Esophagus squamous epithelium (tissue), 5 donors: ENCODE measurements at regions of chr1 and their contacts with region 1.

Region 1: DNA sequence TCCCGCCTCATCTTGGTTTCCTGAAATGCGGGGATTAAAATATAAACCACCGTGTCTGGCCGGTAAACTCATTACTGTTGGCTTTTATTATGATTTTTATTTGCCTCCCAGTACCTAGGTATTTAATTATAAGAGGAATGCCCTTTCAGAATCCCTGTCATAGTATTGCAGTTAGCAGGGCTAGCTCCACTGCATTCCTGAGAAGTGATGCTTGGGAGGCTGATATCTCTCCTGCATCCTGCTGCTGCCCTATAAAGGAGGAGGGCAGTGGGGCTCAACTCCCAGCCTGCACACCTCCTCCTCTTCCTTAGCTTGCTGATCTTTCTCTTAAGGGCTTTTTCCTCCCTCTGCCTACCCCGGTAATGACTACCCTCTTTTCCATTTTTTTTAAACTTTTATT is 19.9 kb upstream of the DISC1 start:
- DNase-seq: no peak
- H3K4me3 ChIP-seq: no peak overlapping the region
- H3K27ac ChIP-seq: no peak overlapping the region
- H3K4me1 ChIP-seq: peaks cover 0 to 24% (median 5%) of the 10 kb centered on the region in 3 donors
- H3K27me3 ChIP-seq: peaks cover 0 to 26% (median 0%) of the 10 kb centered on the region in 4 donors
- CTCF ChIP-seq: no peak
- POLR2A ChIP-seq: no peak

Region 2: GRCh38 chr1:231357831-231358354 is 248.8 kb before region 1 on chr1:
- intact Hi-C with region 1: loop called (anchors 5 kb)
- DNase-seq: no peak
- H3K4me3 ChIP-seq: no peak overlapping the region
- H3K27ac ChIP-seq: peak overlapping the region in 3 of 4 donors; percentile 22 to 59 (median 37)
- H3K4me1 ChIP-seq: peaks cover 0 to 11% (median 0%) of the 10 kb centered on the region in 3 donors
- H3K27me3 ChIP-seq: no peaks in the 10 kb centered on the region
- CTCF ChIP-seq: peak; percentile 52 to 86 (median 78)
- POLR2A ChIP-seq: no peak

Region 3: GRCh38 chr1:232457595-232457994 is 850.9 kb after region 1 on chr1:
- intact Hi-C with region 1: no loop called
- DNase-seq: no peak
- H3K4me3 ChIP-seq: no peak overlapping the region
- H3K27ac ChIP-seq: no peak overlapping the region
- H3K4me1 ChIP-seq: peaks cover 0 to 11% (median 0%) of the 10 kb centered on the region in 3 donors
- H3K27me3 ChIP-seq: no peaks in the 10 kb centered on the region
- CTCF ChIP-seq: no peak
- POLR2A ChIP-seq: no peak